ENCODE measurements at regions of chr20 and their contacts with region 1.

Region 1: GRCh38 chr20:34069341-34070078 is 42.5 kb downstream of the EIF2S2 start:
- DNase-seq: peak; percentile 91
- H3K4me3 ChIP-seq: no peak overlapping the region
- H3K27ac ChIP-seq: peak overlapping the region; percentile 13
- H3K4me1 ChIP-seq: peaks cover 51% of the 10 kb centered on the region
- H3K27me3 ChIP-seq: no peaks in the 10 kb centered on the region
- CTCF ChIP-seq: peak; percentile 86

Region 2: DNA sequence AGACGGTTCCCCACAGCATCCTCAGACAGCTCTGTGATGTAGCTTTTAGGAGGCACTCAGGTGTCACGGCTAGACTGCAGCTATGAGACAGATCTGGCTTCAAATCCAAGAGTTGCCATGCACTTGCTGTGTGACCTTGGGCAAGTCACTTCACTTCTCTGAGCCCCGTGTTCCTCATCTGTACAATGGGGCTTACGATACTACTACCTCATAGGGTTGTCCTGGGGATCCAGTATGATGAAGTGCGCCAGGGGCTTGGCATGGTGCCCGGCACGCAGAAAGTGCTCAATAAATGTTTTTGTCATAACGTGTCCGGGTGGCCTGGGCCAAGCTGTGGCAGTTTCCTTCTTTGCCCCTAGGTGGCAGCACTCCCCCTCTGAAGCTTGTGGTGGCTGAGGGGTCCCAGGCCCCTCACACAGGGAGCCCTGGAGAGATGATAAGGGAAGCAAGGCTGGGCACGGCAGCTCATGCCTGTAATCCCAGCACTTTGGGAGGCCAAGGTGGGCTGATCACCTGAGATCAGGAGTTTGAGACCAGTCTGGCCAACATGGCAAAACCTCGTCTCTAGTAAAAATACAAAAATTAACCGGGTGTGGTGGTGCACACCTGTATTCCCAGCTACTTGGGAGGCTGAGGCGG is 277.4 kb before region 1 on chr20:
- CTCF ChIA-PET with region 1: interaction called, 4 read pairs
- POLR2A ChIA-PET with region 1: no interaction called
- intact Hi-C with region 1: loop called (anchors 5 kb)
- DNase-seq: peak; percentile 69
- H3K4me3 ChIP-seq: no peak overlapping the region
- H3K27ac ChIP-seq: no peak overlapping the region
- H3K4me1 ChIP-seq: no peaks in the 10 kb centered on the region
- H3K27me3 ChIP-seq: no peaks in the 10 kb centered on the region
- CTCF ChIP-seq: peak; percentile 84

Region 3: DNA sequence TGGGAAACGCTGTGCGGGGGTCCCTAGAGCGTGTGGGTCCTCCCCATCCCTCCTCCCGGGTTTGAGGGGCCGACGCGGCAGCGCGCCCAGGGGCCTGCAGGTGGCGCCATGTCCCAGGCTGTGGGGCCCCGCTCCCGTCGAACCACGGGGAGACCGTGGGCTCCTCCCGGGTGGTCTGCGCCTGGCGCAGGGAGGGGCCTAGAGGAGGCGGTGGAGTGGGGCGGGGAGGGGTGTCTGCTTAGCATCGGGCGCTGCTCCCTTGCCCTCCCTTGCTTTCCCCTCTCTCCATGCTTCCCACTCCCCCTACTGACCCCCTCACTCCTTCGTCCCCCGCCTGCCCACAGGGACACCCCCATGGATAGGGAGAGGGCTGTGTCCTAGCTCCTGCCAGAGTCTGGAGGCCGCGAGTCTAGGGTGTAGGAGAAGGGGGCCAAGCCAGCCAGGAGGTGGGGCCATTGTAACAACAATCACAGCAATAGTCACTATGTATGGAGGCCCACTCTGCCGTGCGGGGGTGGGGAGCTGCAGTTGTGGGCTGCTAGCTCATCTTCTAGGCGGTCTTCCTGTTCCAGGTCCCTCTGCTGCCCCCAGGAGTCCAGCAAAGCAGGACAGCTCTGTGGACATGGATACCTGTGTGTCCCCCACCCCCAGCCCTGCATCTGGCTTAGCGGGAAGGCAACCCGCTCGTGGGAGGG is 206.7 kb before region 1 on chr20:
- CTCF ChIA-PET with region 1: interaction called, 6 read pairs
- POLR2A ChIA-PET with region 1: no interaction called
- intact Hi-C with region 1: loop called (anchors 1 kb)
- DNase-seq: peak; percentile 78
- H3K4me3 ChIP-seq: peak overlapping the region; percentile 38
- H3K27ac ChIP-seq: peak overlapping the region; percentile 52
- H3K4me1 ChIP-seq: peaks cover 6% of the 10 kb centered on the region
- H3K27me3 ChIP-seq: no peaks in the 10 kb centered on the region
- CTCF ChIP-seq: peak; percentile 95

Region 4: GRCh38 chr20:33933469-33933909 is 136.0 kb before region 1 on chr20:
- CTCF ChIA-PET with region 1: interaction called, 3 read pairs
- POLR2A ChIA-PET with region 1: no interaction called
- intact Hi-C with region 1: loop called (anchors 5 kb)
- DNase-seq: peak; percentile 80
- H3K4me3 ChIP-seq: no peak overlapping the region
- H3K27ac ChIP-seq: no peak overlapping the region
- H3K4me1 ChIP-seq: no peaks in the 10 kb centered on the region
- H3K27me3 ChIP-seq: no peaks in the 10 kb centered on the region
- CTCF ChIP-seq: peak; percentile 70

Region 5: GRCh38 chr20:34260208-34260942 is 190.9 kb after region 1 on chr20:
- CTCF ChIA-PET with region 1: no interaction called
- POLR2A ChIA-PET with region 1: interaction called, 12 read pairs
- intact Hi-C with region 1: no loop called
- DNase-seq: no peak
- H3K4me3 ChIP-seq: no peak overlapping the region
- H3K27ac ChIP-seq: no peak overlapping the region
- H3K4me1 ChIP-seq: no peaks in the 10 kb centered on the region
- H3K27me3 ChIP-seq: no peaks in the 10 kb centered on the region
- CTCF ChIP-seq: no peak

Region 6: DNA sequence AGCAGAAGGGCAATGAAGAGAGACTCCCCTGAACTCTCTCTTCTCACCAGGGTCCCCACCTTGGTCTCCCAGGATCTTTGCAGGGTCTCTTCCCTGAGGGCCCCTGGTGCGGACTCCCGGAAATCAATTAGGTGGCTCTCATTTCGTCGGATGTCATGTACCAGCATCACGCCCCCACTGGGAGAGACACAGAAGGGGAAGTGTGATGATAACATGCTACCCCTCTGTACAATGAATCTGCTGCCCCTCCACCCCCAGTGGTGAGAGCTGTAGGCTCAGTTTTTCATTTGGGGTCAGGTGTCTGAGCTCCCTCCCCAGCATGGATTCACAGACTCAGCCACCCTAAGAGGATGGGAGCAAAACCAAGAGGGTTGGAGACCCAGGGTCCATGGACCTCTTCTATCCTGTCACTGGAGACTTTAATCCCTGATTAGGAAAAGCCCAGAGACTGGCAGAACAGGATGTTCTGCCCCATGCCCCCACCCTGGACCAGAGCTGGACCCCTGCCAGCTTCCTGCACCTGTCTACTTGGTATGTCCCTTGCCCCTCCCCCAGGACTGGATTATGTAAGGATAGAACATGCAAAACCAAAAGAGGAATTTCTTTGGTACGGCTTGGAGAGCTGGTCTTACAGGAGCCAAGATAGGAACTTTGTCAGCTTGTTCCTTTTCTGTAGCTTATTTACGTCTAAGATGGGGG is 792.0 kb after region 1 on chr20:
- CTCF ChIA-PET with region 1: no interaction called
- POLR2A ChIA-PET with region 1: no interaction called
- intact Hi-C with region 1: no loop called
- DNase-seq: no peak
- H3K4me3 ChIP-seq: no peak overlapping the region
- H3K27ac ChIP-seq: no peak overlapping the region
- H3K4me1 ChIP-seq: no peaks in the 10 kb centered on the region
- H3K27me3 ChIP-seq: no peaks in the 10 kb centered on the region
- CTCF ChIP-seq: no peak

Measured in A673 (cell line).